Common myeloid progenitor, CD34-positive (primary cell): ENCODE measurements at regions of chr17 and their contacts with region 1.

Region 1: GRCh38 chr17:45235416-45236281 is 14.0 kb downstream of the FMNL1 start:
- DNase-seq: peak; percentile 82 to 90 (median 83)
- H3K4me3 ChIP-seq: no peak overlapping the region
- H3K27ac ChIP-seq: peak overlapping the region in 1 of 2 experiments; percentile 19
- H3K4me1 ChIP-seq: peaks cover 11 to 44% (median 23%) of the 10 kb centered on the region in 4 experiments
- H3K27me3 ChIP-seq: no peaks in the 10 kb centered on the region

Region 2: GRCh38 chr17:45247429-45248131 is 11.9 kb after region 1 on chr17:
- CTCF ChIA-PET with region 1: interaction called, 34 read pairs
- POLR2A ChIA-PET with region 1: interaction called, 6 read pairs
- DNase-seq: peak; percentile 86 to 92 (median 89)
- H3K4me3 ChIP-seq: peak overlapping the region; percentile 36 to 75 (median 66)
- H3K27ac ChIP-seq: peak overlapping the region in 1 of 2 experiments; percentile 74
- H3K4me1 ChIP-seq: peaks cover 0 to 30% (median 25%) of the 10 kb centered on the region in 4 experiments
- H3K27me3 ChIP-seq: no peaks in the 10 kb centered on the region

Region 3: DNA sequence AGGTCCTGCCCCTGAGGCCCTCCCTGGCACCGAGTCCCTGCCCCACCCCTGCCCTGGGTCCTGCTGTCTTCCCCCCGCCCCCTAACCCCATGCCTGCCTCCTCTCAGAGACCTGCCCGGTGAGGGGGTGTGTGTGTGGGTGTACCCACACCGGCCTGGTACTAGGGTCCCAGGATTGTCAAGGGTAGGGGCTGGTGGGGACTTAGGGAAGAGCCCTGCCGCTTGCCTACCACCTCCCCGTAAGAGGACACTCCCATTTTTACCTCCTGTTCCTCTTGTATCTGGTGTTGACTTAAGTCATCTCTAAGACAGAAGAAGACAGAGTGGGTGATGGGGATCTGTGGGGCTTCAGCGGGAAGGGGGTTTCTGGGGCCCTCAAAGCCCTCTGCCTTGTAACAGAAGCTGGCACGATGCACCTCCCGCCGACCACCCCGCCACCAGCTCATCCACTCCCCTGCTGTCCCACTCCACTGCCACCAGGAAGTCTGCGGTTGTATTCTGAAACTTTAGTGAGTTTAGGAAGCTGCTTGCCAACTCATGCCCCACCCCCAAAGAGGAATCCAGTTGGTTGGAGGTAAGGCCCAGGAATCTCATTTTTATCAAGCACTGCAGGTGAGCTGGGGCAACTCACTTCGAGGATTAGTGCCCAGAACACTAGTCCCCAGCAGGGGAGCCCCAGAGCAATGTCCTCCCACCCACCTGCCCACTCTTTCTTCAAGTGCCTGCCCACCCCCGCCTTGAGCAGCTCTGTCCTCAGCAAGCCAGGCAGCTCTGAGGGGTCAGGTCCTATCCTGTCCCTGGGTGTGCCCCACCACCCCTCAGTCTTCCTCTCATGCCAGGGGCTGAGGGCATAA is 20.7 kb after region 1 on chr17:
- CTCF ChIA-PET with region 1: interaction called, 13 read pairs
- POLR2A ChIA-PET with region 1: no interaction called
- DNase-seq: peak; percentile 15 to 60 (median 28)
- H3K4me3 ChIP-seq: peak overlapping the region in 3 of 7 experiments; percentile 23 to 26 (median 24)
- H3K27ac ChIP-seq: no peak overlapping the region
- H3K4me1 ChIP-seq: peaks cover 2 to 25% (median 17%) of the 10 kb centered on the region in 4 experiments
- H3K27me3 ChIP-seq: no peaks in the 10 kb centered on the region